Activated CD8-positive, alpha-beta memory T cell treated with anti-CD3 and anti-CD28 coated beads, Interleukin-2, amount 10 ng/mL, durations not matched to agents 7 days and 5 days (primary cell): ENCODE measurements at regions of chr1 and their contacts with region 1.

Region 1: DNA sequence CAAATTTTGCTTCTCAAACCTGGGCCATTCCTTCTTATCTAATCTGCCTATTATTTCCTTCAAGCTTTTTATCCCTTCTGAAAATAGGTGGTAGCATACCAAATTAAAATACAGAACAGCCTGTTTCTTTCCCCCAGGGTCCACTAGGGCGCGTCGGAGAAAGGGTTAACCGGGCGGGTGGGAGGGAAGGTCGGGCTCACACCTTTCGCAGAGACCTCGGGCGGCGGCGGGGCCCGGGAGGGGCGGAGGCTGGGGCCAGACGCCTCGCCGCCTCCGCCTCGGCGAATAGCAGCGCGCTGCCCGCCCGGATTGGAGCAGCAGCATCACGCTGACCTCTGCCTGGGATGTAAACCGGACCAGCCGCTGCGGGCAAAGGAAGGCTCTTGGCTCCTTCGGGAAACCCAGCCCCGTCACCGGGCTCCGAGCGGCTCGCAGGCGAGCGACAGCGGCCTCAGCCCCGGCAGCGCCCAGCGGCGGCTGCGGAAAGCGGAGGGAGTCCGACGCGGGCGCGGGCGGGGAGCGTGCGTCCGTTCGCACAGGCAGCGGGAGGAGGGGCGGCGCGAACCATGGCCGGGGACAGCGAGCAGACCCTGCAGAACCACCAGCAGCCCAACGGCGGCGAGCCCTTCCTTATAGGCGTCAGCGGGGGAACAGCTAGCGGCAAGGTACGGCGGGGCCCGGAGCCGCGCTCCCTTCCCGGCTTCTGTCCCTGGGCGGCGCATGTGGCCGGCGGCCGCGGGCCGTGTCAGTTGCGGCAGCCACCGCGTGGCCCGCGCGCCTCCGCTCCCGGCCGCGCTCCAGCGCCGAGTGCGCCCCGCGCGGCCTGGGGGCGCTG is at the start of gene UCK2:
- DNase-seq: peak; percentile 77
- ATAC-seq: peak; percentile 82
- H3K4me3 Mint-ChIP-seq: peak within 1 kb of the TSS; percentile 91
- H3K27ac Mint-ChIP-seq: peak within 1 kb of the TSS; percentile 85
- H3K4me1 Mint-ChIP-seq: peaks cover 31% of the 10 kb centered on the region
- H3K27me3 Mint-ChIP-seq: no peaks in the 10 kb centered on the region
- total RNA-seq, gene UCK2: 50.7 to 70.3 TPM

Region 2: DNA sequence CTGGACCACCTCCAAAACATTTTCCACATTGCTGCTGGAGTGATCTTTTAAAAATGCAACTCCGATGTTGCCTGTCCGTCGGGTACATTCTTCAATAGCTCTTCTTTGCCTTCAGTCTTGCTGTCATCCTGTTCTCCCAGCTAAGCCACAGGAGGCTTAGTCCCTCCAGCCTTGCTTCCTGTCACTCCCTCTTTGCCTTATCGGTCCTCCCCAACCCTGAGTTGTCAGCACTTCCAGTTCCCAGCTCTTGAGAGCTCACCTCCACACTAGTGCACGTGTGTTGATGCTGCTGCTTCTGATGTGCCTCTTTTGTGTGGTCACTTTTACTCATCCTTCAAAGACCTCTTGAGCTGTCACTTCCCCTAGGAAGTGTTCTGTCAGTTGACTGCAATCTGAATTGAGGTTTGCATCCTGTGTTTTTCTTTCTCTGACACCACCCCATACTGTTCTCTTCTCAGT is 15.2 kb after region 1 on chr1:
- CTCF ChIA-PET with region 1: interaction called, 17 read pairs
- DNase-seq: peak; percentile 44
- ATAC-seq: peak; percentile 43
- H3K4me3 Mint-ChIP-seq: no peak overlapping the region
- H3K27ac Mint-ChIP-seq: peak overlapping the region; percentile 44
- H3K4me1 Mint-ChIP-seq: peaks cover 53% of the 10 kb centered on the region
- H3K27me3 Mint-ChIP-seq: no peaks in the 10 kb centered on the region

Region 3: GRCh38 chr1:165933446-165934178 is 106.1 kb after region 1 on chr1:
- CTCF ChIA-PET with region 1: no interaction called
- DNase-seq: no peak
- ATAC-seq: no peak
- H3K4me3 Mint-ChIP-seq: no peak overlapping the region
- H3K27ac Mint-ChIP-seq: no peak overlapping the region
- H3K4me1 Mint-ChIP-seq: no peaks in the 10 kb centered on the region
- H3K27me3 Mint-ChIP-seq: no peaks in the 10 kb centered on the region